Gastrocnemius medialis (tissue), 4 donors: ENCODE measurements at regions of chr22 and their contacts with region 1.

Region 1: DNA sequence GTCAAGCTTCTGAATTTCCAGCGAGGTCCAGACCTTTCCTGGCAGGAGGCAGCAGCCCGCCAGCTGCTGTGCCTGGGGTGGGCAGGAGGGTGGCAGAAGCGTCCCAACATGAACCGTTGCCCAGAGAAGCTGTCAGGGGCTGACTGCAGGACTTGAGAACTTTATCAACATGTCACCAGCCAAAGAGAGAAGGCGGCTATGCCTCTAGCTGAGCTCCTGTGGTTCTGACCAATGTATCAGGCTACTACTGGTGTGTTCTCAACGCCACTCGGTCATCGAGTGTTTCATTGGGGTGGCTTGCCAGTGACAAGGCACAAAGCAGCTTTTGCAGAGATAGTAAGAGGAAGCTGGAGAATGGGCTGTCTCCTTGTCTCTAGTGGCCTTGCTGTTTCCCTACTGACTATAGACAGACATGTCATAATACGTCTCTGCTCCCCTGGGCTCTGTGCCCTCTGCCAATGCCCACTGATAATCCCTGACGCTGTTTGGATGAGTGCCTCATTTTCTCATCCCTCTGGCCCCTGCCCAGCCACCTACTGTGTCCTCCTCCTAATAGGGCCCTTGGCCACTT is 17.6 kb upstream of the ASCC2 start:
- DNase-seq: peak in 1 of 2 donors; percentile 75
- ATAC-seq: peak; percentile 54 to 85
- H3K4me3 ChIP-seq: no peak overlapping the region
- H3K27ac ChIP-seq: peak overlapping the region; percentile 65 to 80 (median 78)
- H3K4me1 ChIP-seq: peaks cover 8 to 16% of the 10 kb centered on the region in 2 donors
- H3K27me3 ChIP-seq: no peaks in the 10 kb centered on the region
- CTCF ChIP-seq: peak; percentile 11 to 54 (median 27)
- POLR2A ChIP-seq: no peak

Region 2: GRCh38 chr22:29782061-29782845 is 73.4 kb before region 1 on chr22:
- in situ Hi-C with region 1: no loop called
- intact Hi-C with region 1: no loop called
- DNase-seq: peak; percentile 68 to 84
- ATAC-seq: peak; percentile 43 to 65
- H3K4me3 ChIP-seq: no peak overlapping the region
- H3K27ac ChIP-seq: peak overlapping the region; percentile 81 to 90 (median 87)
- H3K4me1 ChIP-seq: peaks cover 39 to 42% of the 10 kb centered on the region in 2 donors
- H3K27me3 ChIP-seq: no peaks in the 10 kb centered on the region
- CTCF ChIP-seq: no peak
- POLR2A ChIP-seq: no peak

Region 3: DNA sequence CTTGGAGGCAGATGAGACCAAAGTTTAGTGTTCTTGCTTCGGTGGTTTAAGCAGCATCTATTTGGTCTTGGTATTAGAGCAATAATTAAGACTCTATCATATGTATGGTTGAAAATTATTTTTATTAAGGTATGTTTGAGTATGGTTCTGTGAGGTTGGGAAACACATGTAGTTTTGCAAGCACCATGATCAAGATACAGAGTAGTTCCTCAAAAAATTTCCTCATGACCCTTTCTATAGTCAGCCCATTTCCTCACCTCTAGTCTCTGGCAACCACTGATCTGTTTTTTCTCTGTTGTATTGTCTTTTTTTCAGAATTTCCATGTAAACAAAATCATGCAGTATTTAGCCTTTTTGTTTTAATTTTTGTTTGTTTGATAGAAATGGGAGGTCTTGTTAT is 45.7 kb after region 1 on chr22:
- in situ Hi-C with region 1: no loop called
- intact Hi-C with region 1: no loop called
- DNase-seq: no peak
- ATAC-seq: no peak
- H3K4me3 ChIP-seq: no peak overlapping the region
- H3K27ac ChIP-seq: no peak overlapping the region
- H3K4me1 ChIP-seq: peaks cover 46 to 47% of the 10 kb centered on the region in 2 donors
- H3K27me3 ChIP-seq: no peaks in the 10 kb centered on the region
- CTCF ChIP-seq: no peak
- POLR2A ChIP-seq: no peak

Region 4: DNA sequence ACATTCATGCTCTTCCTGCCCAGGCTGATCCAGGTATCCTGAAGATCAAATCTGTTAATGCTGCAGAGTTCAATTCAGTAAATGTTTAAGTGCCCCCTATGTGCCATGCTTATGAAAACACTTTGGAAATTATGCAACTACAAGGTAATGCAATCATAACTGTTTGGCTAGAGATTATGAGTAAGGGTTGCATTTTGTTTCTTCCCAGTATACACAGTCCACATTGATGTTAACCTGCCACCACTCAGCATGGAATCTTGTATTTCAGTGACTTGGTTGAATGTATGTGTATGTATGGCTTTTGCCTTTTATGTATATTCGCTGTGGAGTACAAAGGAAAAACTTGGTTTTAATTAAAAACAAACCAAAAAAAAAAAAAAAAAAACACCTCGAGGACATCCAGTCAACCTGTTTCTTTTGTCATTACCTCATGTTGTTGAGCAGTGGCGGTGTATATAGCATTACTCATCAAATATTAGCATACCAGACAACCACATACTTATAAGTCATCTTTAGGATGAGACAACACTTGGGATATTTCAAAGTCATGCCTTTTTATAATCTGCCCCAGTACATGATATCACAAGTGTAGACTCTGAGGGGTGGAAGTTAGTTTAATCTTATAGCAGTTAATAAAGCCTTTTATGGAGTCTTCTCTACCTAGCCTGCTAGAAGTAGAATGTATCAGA is 138.5 kb after region 1 on chr22:
- in situ Hi-C with region 1: no loop called
- intact Hi-C with region 1: loop called (anchors 5 kb)
- DNase-seq: no peak
- ATAC-seq: no peak
- H3K4me3 ChIP-seq: no peak overlapping the region
- H3K27ac ChIP-seq: peak overlapping the region; percentile 23 to 70 (median 62)
- H3K4me1 ChIP-seq: peaks cover 44 to 51% of the 10 kb centered on the region in 2 donors
- H3K27me3 ChIP-seq: no peaks in the 10 kb centered on the region
- CTCF ChIP-seq: no peak
- POLR2A ChIP-seq: no peak